Naive thymus-derived CD4-positive, alpha-beta T cell (primary cell): ENCODE measurements at regions of chr6 and their contacts with region 1.

Region 1: DNA sequence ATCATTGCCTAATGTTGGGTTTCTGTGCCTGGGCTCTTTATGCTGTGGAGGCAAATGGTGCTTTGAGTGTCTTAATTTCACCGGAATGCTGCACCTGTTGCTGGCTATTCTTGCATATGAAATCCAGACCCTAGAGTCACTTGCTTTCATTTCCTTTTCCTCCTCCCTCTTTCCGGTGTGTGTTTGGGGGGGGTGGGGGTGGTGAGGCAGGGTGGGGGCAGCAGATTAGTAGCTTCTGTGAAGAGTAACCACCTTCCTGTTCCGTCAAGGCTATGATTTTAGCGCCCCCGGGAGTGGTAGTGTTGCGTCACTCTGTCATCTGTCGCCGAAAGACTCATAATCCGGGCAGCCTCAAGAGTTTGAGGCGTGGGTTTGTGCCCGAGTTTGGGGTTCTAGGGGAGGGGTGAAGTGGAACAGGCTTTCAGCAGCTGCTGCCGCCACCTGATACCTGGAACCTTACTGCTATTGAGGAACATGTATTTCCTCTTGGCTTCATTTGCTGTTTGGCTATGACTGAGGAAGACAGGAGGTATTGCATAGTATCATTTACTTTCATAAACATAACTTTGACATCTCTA is 49.1 kb downstream of the UTRN start:
- DNase-seq: peak; percentile 24 to 87 (median 83)
- ATAC-seq: peak; percentile 91
- H3K4me3 ChIP-seq: peak overlapping the region; percentile 59
- H3K4me3 Mint-ChIP-seq: peak overlapping the region; percentile 80 to 93 (median 86)
- H3K27ac ChIP-seq: peak overlapping the region; percentile 75
- H3K27ac Mint-ChIP-seq: peak overlapping the region; percentile 87 to 98 (median 96)
- H3K4me1 ChIP-seq: peaks cover 34 to 41% of the 10 kb centered on the region in 2 donors
- H3K4me1 Mint-ChIP-seq: peaks cover 40 to 74% (median 59%) of the 10 kb centered on the region in 7 donors
- H3K27me3 ChIP-seq: no peaks in the 10 kb centered on the region
- H3K27me3 Mint-ChIP-seq: no peaks in the 10 kb centered on the region

Region 2: DNA sequence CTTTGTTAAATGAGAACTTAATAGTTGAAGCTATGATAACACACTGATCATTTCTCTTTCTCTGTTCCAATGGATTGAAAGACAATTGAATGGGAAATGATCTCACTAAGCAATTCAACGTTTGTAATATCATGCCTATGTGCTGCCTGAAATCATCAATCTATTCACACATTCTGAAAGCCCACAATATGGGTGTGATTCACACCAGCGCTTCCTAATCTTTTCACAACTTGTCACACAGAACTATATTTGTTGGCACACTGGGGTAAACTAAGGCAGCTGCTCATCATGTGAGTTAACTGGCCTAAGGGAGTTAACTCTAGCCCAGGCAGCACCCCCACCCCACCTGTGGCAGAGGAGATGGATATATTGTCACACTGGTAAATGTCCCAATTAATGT is 86.2 kb before region 1 on chr6:
- CTCF ChIA-PET with region 1: no interaction called
- POLR2A ChIA-PET with region 1: no interaction called
- intact Hi-C with region 1: no loop called
- DNase-seq: no peak
- ATAC-seq: no peak
- H3K4me3 ChIP-seq: no peak overlapping the region
- H3K4me3 Mint-ChIP-seq: no peak overlapping the region
- H3K27ac ChIP-seq: no peak overlapping the region
- H3K27ac Mint-ChIP-seq: no peak overlapping the region
- H3K4me1 ChIP-seq: no peaks in the 10 kb centered on the region
- H3K4me1 Mint-ChIP-seq: peaks cover 0 to 13% (median 0%) of the 10 kb centered on the region in 7 donors
- H3K27me3 ChIP-seq: no peaks in the 10 kb centered on the region
- H3K27me3 Mint-ChIP-seq: peaks cover 0 to 18% (median 8%) of the 10 kb centered on the region in 5 donors

Region 3: DNA sequence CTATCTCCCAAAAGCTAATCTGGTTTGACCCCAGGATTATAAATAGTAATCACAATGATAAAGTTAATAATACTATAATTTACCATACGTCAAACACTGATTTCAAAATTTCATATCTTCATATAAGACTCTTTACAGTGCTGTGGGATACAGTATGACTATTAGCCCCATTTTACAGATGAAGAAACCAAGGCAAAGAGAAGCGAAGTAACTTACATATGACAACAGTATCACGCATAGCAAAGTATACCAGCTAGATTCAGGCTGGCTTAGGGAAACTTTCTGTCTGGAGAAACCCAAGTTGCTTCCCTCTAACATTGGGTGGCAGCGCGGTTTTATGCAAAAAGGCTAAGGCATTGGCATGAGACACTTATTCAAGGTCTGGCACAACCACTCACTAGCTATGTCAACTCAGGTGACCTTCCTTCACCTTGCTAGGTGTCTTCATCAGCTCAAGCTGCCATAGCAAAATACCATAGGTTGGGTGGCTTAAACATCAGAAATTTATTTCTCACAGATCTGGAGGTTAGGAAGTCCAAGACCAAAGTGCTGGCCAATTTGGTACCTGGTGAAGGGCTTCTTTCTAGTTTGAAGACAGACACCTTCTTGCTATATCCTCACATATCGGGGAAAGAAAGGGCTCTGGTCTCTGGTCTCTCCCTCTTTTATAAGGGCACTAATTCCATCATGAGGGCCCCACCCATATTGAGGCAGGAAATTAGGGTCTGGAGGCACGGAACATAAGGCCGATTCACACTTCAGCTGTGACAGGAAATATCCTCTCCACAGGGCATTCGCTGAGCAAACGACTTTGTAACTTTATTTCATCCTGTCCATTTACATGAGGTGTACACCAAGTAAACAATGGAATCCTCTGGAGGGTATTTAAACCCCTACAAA is 71.5 kb before region 1 on chr6:
- CTCF ChIA-PET with region 1: no interaction called
- POLR2A ChIA-PET with region 1: no interaction called
- intact Hi-C with region 1: loop called in 1 of 2 experiments (anchors 1 kb)
- DNase-seq: peak in 7 of 9 donors; percentile 8 to 41 (median 26)
- ATAC-seq: no peak
- H3K4me3 ChIP-seq: no peak overlapping the region
- H3K4me3 Mint-ChIP-seq: no peak overlapping the region
- H3K27ac ChIP-seq: no peak overlapping the region
- H3K27ac Mint-ChIP-seq: peak overlapping the region in 1 of 9 donors; percentile 10
- H3K4me1 ChIP-seq: no peaks in the 10 kb centered on the region
- H3K4me1 Mint-ChIP-seq: peaks cover 0 to 2% (median 0%) of the 10 kb centered on the region in 7 donors
- H3K27me3 ChIP-seq: no peaks in the 10 kb centered on the region
- H3K27me3 Mint-ChIP-seq: peaks cover 0 to 2% (median 0%) of the 10 kb centered on the region in 5 donors

Region 4: DNA sequence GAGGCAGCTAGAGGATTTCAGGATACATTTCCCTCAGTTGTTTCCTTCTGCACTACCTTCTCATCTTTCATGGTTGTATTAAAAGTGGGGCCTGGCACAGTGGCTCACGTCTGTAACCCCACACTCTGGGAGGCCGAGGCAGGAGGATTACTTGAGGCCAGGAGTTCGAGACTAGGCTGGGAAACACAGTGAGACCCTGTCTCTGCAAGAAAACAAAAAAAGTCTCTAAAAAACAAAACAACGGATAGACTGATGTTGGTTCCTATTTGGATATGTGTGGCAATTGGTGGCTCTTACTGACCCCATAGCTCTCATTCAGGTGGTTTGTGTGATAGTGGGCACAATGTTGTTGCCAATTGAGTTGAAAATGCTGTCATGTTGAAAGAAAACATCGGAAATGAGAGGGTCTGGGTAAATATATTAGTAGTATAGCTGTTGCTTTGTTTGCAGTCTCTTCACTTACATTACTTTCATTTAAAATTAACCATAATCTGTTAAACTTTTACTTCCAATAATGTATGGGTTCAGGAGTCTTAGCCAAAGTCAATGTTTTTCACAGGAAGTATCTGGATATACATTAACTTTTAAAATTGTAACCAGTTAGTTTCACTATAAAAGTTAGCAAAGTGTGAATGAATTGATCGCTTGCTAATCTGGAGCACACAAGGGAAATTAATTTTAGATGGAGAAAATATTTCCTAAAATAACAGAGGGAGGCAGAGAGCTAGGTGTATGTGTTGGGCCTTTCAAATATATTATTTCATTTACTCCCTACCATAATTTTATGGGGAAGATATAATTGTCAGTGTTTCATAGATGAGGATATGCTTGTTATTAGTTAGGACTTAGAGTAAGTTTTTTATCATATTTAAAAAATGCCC is 18.0 kb before region 1 on chr6:
- CTCF ChIA-PET with region 1: no interaction called
- POLR2A ChIA-PET with region 1: no interaction called
- intact Hi-C with region 1: loop called in 1 of 2 experiments (anchors 2 kb)
- DNase-seq: no peak
- ATAC-seq: no peak
- H3K4me3 ChIP-seq: no peak overlapping the region
- H3K4me3 Mint-ChIP-seq: no peak overlapping the region
- H3K27ac ChIP-seq: no peak overlapping the region
- H3K27ac Mint-ChIP-seq: no peak overlapping the region
- H3K4me1 ChIP-seq: no peaks in the 10 kb centered on the region
- H3K4me1 Mint-ChIP-seq: peaks cover 3 to 35% (median 11%) of the 10 kb centered on the region in 7 donors
- H3K27me3 ChIP-seq: no peaks in the 10 kb centered on the region
- H3K27me3 Mint-ChIP-seq: peaks cover 0 to 6% (median 0%) of the 10 kb centered on the region in 5 donors